ENCODE measurements at regions of chr20 and their contacts with region 1.

Region 1: DNA sequence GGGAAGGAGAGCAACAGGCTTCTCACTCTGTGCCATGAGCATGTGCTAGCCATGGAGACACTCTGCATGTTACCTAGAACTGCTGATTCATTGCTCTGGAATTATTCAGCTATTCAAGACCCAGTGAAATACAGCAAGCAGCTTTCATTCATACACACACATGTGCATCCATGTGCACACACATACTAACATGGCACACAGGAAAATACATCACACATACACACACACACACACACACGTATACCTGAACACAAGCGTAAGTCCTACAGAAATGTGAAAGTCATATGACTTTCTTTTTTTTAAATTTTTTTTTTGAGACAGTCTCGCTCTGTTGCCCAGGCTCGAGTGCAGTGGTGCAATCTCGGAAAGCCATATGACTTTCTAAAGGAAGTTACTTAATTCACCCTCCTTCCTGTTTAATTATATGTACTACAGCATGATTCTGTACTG is 108.2 kb upstream of the NFATC2 start:
- DNase-seq: peak; percentile 73
- ATAC-seq: peak; percentile 60
- H3K4me3 ChIP-seq: no peak overlapping the region
- H3K27ac ChIP-seq: no peak overlapping the region
- H3K4me1 ChIP-seq: peaks cover 15% of the 10 kb centered on the region; the same call in 1 of the 2 replicates
- H3K27me3 ChIP-seq: no peaks in the 10 kb centered on the region
- CTCF ChIP-seq: no peak

Region 2: GRCh38 chr20:51042654-51043247 is 608.0 kb before region 1 on chr20:
- CTCF ChIA-PET with region 1: no interaction called
- POLR2A ChIA-PET with region 1: no interaction called
- intact Hi-C with region 1: no loop called
- DNase-seq: peak; percentile 35
- ATAC-seq: peak; percentile 49; the same call in 1 of the 2 replicates
- H3K4me3 ChIP-seq: no peak overlapping the region
- H3K27ac ChIP-seq: no peak overlapping the region
- H3K4me1 ChIP-seq: peaks cover 4% of the 10 kb centered on the region; the same call in 1 of the 2 replicates
- H3K27me3 ChIP-seq: no peaks in the 10 kb centered on the region
- CTCF ChIP-seq: peak; percentile 50

Region 3: DNA sequence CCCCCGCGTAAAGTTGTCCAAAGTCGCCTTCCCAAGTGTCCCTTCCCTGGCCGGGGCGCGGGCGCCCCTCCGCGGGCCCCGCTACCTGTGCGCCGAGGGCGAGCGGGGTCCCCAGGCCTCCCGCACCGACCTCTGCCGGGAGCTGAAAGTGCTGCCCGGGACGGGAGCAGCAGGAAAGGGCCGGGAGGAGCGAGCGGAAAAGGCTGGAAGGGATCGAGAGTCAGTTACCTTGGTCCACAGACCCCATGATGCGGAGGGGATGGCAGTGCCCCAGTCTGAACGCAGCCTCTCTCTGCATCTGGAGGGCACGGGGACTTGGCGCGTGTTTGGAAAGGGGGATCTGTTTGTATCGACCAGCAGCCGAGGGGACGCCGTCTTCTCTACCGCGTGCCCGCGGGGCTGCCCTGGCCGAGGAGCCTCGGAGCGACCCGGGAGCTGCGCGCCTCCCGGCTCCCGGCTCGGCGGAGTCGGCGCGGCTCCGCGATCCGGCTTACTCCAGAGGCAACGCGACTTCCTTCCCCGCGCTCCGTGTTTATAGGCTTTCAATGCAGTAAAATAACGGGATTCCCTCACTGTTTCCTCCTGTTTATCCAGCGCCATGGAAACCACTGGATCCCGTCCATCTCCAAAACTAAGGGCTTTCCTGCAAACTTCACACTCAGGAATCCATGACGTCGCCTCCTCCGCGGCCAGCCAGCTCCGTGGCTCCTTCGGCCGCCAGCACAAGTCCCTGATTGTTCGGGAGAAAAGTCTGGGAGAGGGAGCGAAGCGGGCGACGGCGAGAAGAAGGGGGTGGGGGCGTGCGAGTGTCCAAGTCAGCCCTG is 88.2 kb before region 1 on chr20:
- CTCF ChIA-PET with region 1: no interaction called
- POLR2A ChIA-PET with region 1: no interaction called
- intact Hi-C with region 1: no loop called
- DNase-seq: peak; percentile 93
- ATAC-seq: peak; percentile 56
- H3K4me3 ChIP-seq: peak overlapping the region; percentile 77
- H3K27ac ChIP-seq: peak overlapping the region; percentile 60
- H3K4me1 ChIP-seq: peaks cover 31% of the 10 kb centered on the region
- H3K27me3 ChIP-seq: peaks cover 16% of the 10 kb centered on the region
- CTCF ChIP-seq: peak; percentile 54; the same call in 1 of the 2 replicates

Region 4: DNA sequence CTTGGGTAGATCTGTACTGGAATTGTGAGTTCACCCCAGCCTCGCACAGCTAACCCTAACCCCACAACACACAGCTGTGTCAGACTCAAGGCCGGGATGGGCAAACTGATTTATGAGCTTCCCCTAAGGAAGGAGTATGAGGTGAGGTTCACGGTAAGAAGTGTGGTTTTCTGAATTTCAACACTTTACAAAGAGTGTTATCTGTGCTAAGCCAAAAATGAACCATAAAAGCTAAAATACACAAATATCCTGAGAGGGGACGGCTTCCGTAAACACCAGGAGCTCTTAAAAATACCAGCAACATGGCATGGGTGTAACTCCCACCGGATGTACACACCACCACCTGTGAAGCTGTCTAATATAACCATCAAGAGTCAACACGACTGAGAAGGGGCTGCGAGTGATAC is 16.3 kb after region 1 on chr20:
- CTCF ChIA-PET with region 1: interaction called, 11 read pairs
- POLR2A ChIA-PET with region 1: no interaction called
- intact Hi-C with region 1: no loop called
- DNase-seq: peak; percentile 81
- ATAC-seq: peak; percentile 61
- H3K4me3 ChIP-seq: no peak overlapping the region
- H3K27ac ChIP-seq: peak overlapping the region; percentile 89
- H3K4me1 ChIP-seq: peaks cover 42% of the 10 kb centered on the region
- H3K27me3 ChIP-seq: no peaks in the 10 kb centered on the region
- CTCF ChIP-seq: no peak

Region 5: GRCh38 chr20:51848346-51848745 is 197.6 kb after region 1 on chr20:
- CTCF ChIA-PET with region 1: interaction called, 10 read pairs
- POLR2A ChIA-PET with region 1: no interaction called
- intact Hi-C with region 1: no loop called
- DNase-seq: no peak
- ATAC-seq: no peak
- H3K4me3 ChIP-seq: no peak overlapping the region
- H3K27ac ChIP-seq: no peak overlapping the region
- H3K4me1 ChIP-seq: no peaks in the 10 kb centered on the region
- H3K27me3 ChIP-seq: no peaks in the 10 kb centered on the region
- CTCF ChIP-seq: no peak

Region 6: DNA sequence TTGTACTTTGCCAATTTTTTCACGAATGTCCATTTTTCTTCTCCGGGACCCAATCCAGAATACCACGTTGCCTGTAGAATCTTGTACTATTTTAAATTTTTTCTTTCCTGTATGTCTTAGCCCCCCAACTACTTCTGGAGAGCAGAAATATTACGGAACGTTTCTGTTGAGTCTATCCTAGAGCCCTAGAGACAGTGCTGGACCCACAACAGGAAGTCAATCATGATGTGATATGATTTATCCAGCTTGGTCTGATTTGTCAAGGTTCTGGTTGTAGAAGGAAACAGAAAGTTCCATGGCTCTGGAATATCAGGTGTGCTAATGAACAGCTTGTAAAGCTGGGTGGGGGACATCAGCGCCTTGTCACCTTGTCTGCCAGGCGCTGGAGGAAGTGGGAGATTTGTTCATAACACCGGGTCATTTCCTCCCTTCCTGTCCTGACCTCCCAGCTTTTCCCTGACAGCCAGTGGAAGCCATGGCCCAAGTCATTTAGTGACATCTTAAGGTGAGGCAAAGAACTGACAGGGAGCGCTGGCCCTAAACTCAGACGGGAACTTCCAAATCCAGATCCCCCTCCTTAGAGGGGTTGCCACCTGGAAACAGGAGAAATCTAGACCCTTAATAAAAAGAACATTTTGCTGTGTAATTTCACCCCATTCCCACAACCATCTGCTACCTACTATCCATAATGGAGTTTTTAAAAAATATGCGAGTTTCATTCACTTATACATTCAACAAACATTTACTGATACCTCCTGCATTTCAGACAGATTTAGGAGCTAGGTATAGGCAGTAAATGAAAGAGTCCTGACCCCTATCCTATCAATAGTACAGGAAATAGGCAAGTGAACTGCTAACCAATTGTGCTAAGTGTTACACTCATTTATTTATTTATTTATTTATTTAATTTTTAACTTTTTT is 410.3 kb after region 1 on chr20:
- CTCF ChIA-PET with region 1: no interaction called
- POLR2A ChIA-PET with region 1: no interaction called
- intact Hi-C with region 1: no loop called
- DNase-seq: peak; percentile 84
- ATAC-seq: peak; percentile 72
- H3K4me3 ChIP-seq: no peak overlapping the region
- H3K27ac ChIP-seq: no peak overlapping the region
- H3K4me1 ChIP-seq: peaks cover 9% of the 10 kb centered on the region
- H3K27me3 ChIP-seq: no peaks in the 10 kb centered on the region
- CTCF ChIP-seq: peak; percentile 96